B cell (primary cell): ENCODE measurements at regions of chrX and their contacts with region 1.

Region 1: GRCh38 chrX:15737960-15738902 is at the start of gene CA5B:
- DNase-seq: peak; percentile 95
- ATAC-seq: peak; percentile 94
- H3K4me3 ChIP-seq: peak within 1 kb of the TSS; percentile 17 to 84 (median 72)
- H3K4me3 Mint-ChIP-seq: peak within 1 kb of the TSS; percentile 95
- H3K27ac ChIP-seq: peak within 1 kb of the TSS; percentile 42 to 58
- H3K27ac Mint-ChIP-seq: peak within 1 kb of the TSS; percentile 91
- H3K4me1 ChIP-seq: peaks cover 18 to 19% of the 10 kb centered on the region in 2 donors
- H3K4me1 Mint-ChIP-seq: peaks cover 35% of the 10 kb centered on the region
- H3K27me3 ChIP-seq: no peaks in the 10 kb centered on the region
- H3K27me3 Mint-ChIP-seq: no peaks in the 10 kb centered on the region
- CTCF ChIP-seq: no peak
- total RNA-seq, gene CA5B: 17.2 and 17.7 TPM in 2 replicates

Region 2: GRCh38 chrX:15335135-15336022 is 402.9 kb before region 1 on chrX and contains the start of gene PIGA:
- CTCF ChIA-PET with region 1: no interaction called
- POLR2A ChIA-PET with region 1: no interaction called
- intact Hi-C with region 1: loop called (anchors 5 kb)
- DNase-seq: peak; percentile 94
- ATAC-seq: peak; percentile 91
- H3K4me3 ChIP-seq: peak within 1 kb of the TSS; percentile 65 to 93 (median 74)
- H3K4me3 Mint-ChIP-seq: peak within 1 kb of the TSS; percentile 92
- H3K27ac ChIP-seq: peak within 1 kb of the TSS; percentile 84 to 95
- H3K27ac Mint-ChIP-seq: peak within 1 kb of the TSS; percentile 94
- H3K4me1 ChIP-seq: peaks cover 4 to 15% of the 10 kb centered on the region in 2 donors
- H3K4me1 Mint-ChIP-seq: peaks cover 20% of the 10 kb centered on the region
- H3K27me3 ChIP-seq: peaks cover 0 to 15% (median 1%) of the 10 kb centered on the region in 4 experiments
- H3K27me3 Mint-ChIP-seq: peaks cover 8% of the 10 kb centered on the region
- CTCF ChIP-seq: no peak
- total RNA-seq, gene PIGA: 25.7 and 26.0 TPM in 2 replicates

Region 3: GRCh38 chrX:15674841-15675489 is 63.3 kb before region 1 on chrX:
- CTCF ChIA-PET with region 1: interaction called, 4 read pairs
- POLR2A ChIA-PET with region 1: interaction called, 5 read pairs
- intact Hi-C with region 1: loop called (anchors 1 kb)
- DNase-seq: peak; percentile 96
- ATAC-seq: peak; percentile 81
- H3K4me3 ChIP-seq: peak overlapping the region; percentile 67 to 99 (median 80)
- H3K4me3 Mint-ChIP-seq: no peak overlapping the region
- H3K27ac ChIP-seq: peak overlapping the region; percentile 98 to 100
- H3K27ac Mint-ChIP-seq: no peak overlapping the region
- H3K4me1 ChIP-seq: peaks cover 16 to 17% of the 10 kb centered on the region in 2 donors
- H3K4me1 Mint-ChIP-seq: peaks cover 15% of the 10 kb centered on the region
- H3K27me3 ChIP-seq: no peaks in the 10 kb centered on the region
- H3K27me3 Mint-ChIP-seq: no peaks in the 10 kb centered on the region
- CTCF ChIP-seq: no peak

Region 4: DNA sequence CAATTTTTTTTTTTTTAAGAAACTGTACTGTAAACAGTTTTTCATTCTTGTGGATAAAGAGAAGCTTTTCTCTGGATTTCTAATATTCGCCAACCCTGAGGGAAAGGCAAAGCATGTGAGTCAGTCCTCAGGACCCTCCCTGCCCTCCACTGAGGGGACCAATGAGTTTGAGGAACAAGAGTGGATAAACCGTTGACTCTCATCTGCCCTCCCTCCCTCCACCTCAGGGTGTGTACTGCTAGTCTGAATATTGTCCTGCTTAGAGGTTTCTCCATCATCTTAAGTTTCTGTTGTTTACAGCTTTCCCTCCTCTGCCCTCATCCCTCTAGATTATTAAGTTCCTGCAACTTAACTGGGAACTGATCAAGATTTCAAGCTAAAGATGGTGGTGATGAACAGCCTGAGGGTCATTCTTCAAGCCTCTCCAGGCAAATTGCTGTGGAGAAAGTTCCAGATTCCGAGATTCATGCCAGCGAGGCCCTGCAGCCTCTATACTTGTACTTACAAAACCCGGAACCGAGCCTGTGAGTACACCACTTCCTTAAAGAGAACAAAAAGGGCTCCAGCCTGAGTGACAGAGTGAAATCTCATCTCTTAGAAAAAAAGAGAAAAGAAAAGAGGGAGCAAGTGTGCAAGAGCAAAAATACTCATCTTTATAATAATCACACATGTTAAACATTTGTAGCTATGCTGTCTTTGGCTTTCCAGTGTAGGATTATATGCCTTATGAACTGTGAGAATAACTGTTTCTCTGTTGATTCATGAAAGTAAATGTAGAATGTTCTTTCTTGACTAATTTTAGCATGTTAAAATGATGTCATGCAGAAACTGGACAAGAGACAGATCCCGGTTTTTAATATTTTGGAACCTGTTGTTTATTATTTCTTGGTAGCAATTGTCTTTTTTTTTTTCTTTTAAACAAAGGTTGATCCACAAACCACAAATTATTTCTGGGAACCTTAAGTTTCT is 11.7 kb after region 1 on chrX:
- CTCF ChIA-PET with region 1: interaction called, 28 read pairs
- POLR2A ChIA-PET with region 1: interaction called, 10 read pairs
- intact Hi-C with region 1: loop called (anchors 1 kb)
- DNase-seq: peak; percentile 60
- ATAC-seq: peak; percentile 70
- H3K4me3 ChIP-seq: peak overlapping the region in 2 of 5 experiments; percentile 21 to 46
- H3K4me3 Mint-ChIP-seq: peak overlapping the region; percentile 58
- H3K27ac ChIP-seq: peak overlapping the region; percentile 94 to 97
- H3K27ac Mint-ChIP-seq: peak overlapping the region; percentile 99
- H3K4me1 ChIP-seq: peaks cover 31 to 39% of the 10 kb centered on the region in 2 donors
- H3K4me1 Mint-ChIP-seq: peaks cover 53% of the 10 kb centered on the region
- H3K27me3 ChIP-seq: no peaks in the 10 kb centered on the region
- H3K27me3 Mint-ChIP-seq: no peaks in the 10 kb centered on the region
- CTCF ChIP-seq: no peak

Region 5: GRCh38 chrX:16511776-16512400 is 773.7 kb after region 1 on chrX:
- CTCF ChIA-PET with region 1: no interaction called
- POLR2A ChIA-PET with region 1: no interaction called
- intact Hi-C with region 1: no loop called
- DNase-seq: no peak
- ATAC-seq: no peak
- H3K4me3 ChIP-seq: no peak overlapping the region
- H3K4me3 Mint-ChIP-seq: no peak overlapping the region
- H3K27ac ChIP-seq: no peak overlapping the region
- H3K27ac Mint-ChIP-seq: no peak overlapping the region
- H3K4me1 ChIP-seq: no peaks in the 10 kb centered on the region
- H3K4me1 Mint-ChIP-seq: no peaks in the 10 kb centered on the region
- H3K27me3 ChIP-seq: no peaks in the 10 kb centered on the region
- H3K27me3 Mint-ChIP-seq: no peaks in the 10 kb centered on the region
- CTCF ChIP-seq: no peak